OCI-LY7 (cell line): ENCODE measurements at regions of chr10 and their contacts with region 1.

Region 1: GRCh38 chr10:49524496-49524895 is 14.4 kb downstream of the ERCC6 start:
- DNase-seq: no peak
- H3K4me3 ChIP-seq: no peak overlapping the region
- H3K27ac ChIP-seq: no peak overlapping the region
- H3K4me1 ChIP-seq: no peaks in the 10 kb centered on the region
- CTCF ChIP-seq: no peak

Region 2: GRCh38 chr10:49538381-49539319 is 14.2 kb after region 1 on chr10 and contains the start of gene ERCC6:
- CTCF ChIA-PET with region 1: no interaction called
- POLR2A ChIA-PET with region 1: interaction called, 10 read pairs
- intact Hi-C with region 1: no loop called
- DNase-seq: peak; percentile 97
- H3K4me3 ChIP-seq: peak within 1 kb of the TSS; percentile 74
- H3K27ac ChIP-seq: peak within 1 kb of the TSS; percentile 49
- H3K4me1 ChIP-seq: peaks cover 33% of the 10 kb centered on the region
- CTCF ChIP-seq: 0 out of 2 replicates have a peak, but pooled peaks have one; percentile 15
- total RNA-seq, gene ERCC6: 7.8 and 8.8 TPM in 2 replicates